ENCODE measurements at regions of chr20 and their contacts with region 1.

Region 1: DNA sequence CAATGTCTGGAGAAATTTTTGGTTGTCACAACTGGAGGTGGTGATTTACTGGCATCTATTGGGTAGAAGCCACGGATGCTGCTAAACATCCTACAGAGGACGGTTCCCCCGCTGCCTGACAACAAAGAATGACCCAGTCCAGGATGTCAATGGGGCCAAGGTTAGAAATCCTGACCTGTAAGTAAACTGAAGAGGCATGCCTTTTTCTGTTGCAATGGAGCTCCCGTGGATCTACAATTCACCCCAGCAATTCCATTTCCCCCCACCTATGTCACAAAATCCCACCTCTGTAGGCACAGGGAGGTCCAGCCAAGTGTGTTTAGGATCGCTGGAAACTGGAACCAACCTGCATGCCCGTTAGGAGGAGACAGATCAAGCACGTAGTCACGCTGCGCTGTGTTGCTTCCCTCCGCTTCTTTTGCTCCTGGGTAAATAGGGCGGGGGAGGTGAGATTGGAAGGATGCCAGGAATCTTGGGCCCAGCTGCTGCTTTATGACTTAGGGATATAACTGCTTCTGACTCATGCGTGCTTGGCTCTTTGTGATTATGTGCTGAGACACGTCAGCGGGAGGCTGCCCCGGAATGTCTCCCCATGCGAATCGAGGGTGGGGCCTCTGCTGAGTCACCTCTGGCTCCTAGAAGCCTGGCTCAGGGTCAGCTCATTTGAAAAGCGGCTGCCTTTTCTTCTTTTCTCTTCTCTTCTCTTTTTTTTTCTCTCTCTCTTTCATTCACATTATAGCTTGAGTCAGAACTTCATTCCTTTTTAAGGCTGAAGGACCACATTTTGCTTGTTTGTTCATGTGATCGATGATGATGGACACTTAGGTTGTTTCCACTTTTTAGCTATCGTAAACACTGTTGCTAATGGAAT is 12.4 kb upstream of the PEDS1 start:
- DNase-seq: peak; percentile 66
- ATAC-seq: peak; percentile 99
- H3K4me3 Mint-ChIP-seq: peak overlapping the region; percentile 68
- H3K27ac Mint-ChIP-seq: peak overlapping the region; percentile 61
- H3K4me1 Mint-ChIP-seq: peaks cover 14% of the 10 kb centered on the region
- H3K27me3 Mint-ChIP-seq: peaks cover 6% of the 10 kb centered on the region
- CTCF ChIP-seq: no peak

Region 2: DNA sequence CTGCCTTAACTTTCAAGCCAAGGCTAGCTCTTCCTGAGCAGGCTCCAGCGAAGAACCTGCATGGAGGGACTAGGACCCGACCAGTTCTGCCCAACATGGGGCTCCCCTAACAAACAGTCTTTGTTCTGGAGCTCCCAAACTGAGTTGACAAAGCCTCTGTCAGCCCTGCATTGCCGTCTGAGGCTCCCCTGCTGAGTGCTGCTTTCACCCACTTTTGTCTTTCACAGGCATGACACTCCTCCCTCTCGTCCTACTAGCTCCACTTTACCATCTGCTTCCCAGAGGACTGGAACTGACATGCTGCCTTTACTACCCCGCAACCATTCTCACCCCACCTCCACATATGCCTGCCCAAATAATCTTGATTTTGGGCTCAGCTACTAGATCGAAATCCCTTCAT is 407.1 kb before region 1 on chr20:
- CTCF ChIA-PET with region 1: no interaction called
- POLR2A ChIA-PET with region 1: no interaction called
- intact Hi-C with region 1: no loop called
- DNase-seq: no peak
- ATAC-seq: no peak
- H3K4me3 Mint-ChIP-seq: no peak overlapping the region
- H3K27ac Mint-ChIP-seq: no peak overlapping the region
- H3K4me1 Mint-ChIP-seq: no peaks in the 10 kb centered on the region
- H3K27me3 Mint-ChIP-seq: no peaks in the 10 kb centered on the region
- CTCF ChIP-seq: no peak

Region 3: GRCh38 chr20:50085452-50086365 is 80.2 kb before region 1 on chr20:
- CTCF ChIA-PET with region 1: interaction called, 15 read pairs
- POLR2A ChIA-PET with region 1: no interaction called
- intact Hi-C with region 1: no loop called
- DNase-seq: no peak
- ATAC-seq: peak; percentile 82
- H3K4me3 Mint-ChIP-seq: peak overlapping the region; percentile 83
- H3K27ac Mint-ChIP-seq: peak overlapping the region; percentile 55
- H3K4me1 Mint-ChIP-seq: peaks cover 14% of the 10 kb centered on the region
- H3K27me3 Mint-ChIP-seq: no peaks in the 10 kb centered on the region
- CTCF ChIP-seq: no peak

Region 4: GRCh38 chr20:50153485-50154377 is 12.2 kb before region 1 on chr20 and contains the start of gene PEDS1:
- CTCF ChIA-PET with region 1: interaction called, 29 read pairs
- POLR2A ChIA-PET with region 1: interaction called, 12 read pairs
- intact Hi-C with region 1: loop called (anchors 1 kb)
- DNase-seq: peak; percentile 78
- ATAC-seq: peak; percentile 98
- H3K4me3 Mint-ChIP-seq: peak within 1 kb of the TSS; percentile 85
- H3K27ac Mint-ChIP-seq: peak within 1 kb of the TSS; percentile 59
- H3K4me1 Mint-ChIP-seq: peaks cover 36% of the 10 kb centered on the region
- H3K27me3 Mint-ChIP-seq: no peaks in the 10 kb centered on the region
- CTCF ChIP-seq: no peak
- total RNA-seq, gene PEDS1: 9.8 and 9.9 TPM in 2 replicates

Region 5: GRCh38 chr20:50179507-50180016 is 13.6 kb after region 1 on chr20:
- CTCF ChIA-PET with region 1: interaction called, 10 read pairs
- POLR2A ChIA-PET with region 1: interaction called, 6 read pairs
- intact Hi-C with region 1: no loop called
- DNase-seq: no peak
- ATAC-seq: no peak
- H3K4me3 Mint-ChIP-seq: no peak overlapping the region
- H3K27ac Mint-ChIP-seq: no peak overlapping the region
- H3K4me1 Mint-ChIP-seq: no peaks in the 10 kb centered on the region
- H3K27me3 Mint-ChIP-seq: no peaks in the 10 kb centered on the region
- CTCF ChIP-seq: no peak

Measured in activated B cell treated with CpG ODN at 0.5 μM for 24 hours (primary cell).